ENCODE measurements at regions of chr17 and their contacts with region 1.

Region 1: GRCh38 chr17:19904924-19905323 is 37.2 kb upstream of the ULK2 start:
- DNase-seq: no peak
- ATAC-seq: no peak
- H3K4me3 ChIP-seq: no peak overlapping the region
- H3K4me3 Mint-ChIP-seq: no peak overlapping the region
- H3K27ac ChIP-seq: no peak overlapping the region
- H3K27ac Mint-ChIP-seq: peak overlapping the region in 1 of 2 donors; percentile 16
- H3K4me1 ChIP-seq: no peaks in the 10 kb centered on the region
- H3K4me1 Mint-ChIP-seq: no peaks in the 10 kb centered on the region
- H3K27me3 ChIP-seq: no peaks in the 10 kb centered on the region
- H3K27me3 Mint-ChIP-seq: no peaks in the 10 kb centered on the region

Region 2: GRCh38 chr17:19629449-19629848 is 275.5 kb before region 1 on chr17:
- CTCF ChIA-PET with region 1: no interaction called
- POLR2A ChIA-PET with region 1: no interaction called
- DNase-seq: no peak
- ATAC-seq: no peak
- H3K4me3 ChIP-seq: no peak overlapping the region
- H3K4me3 Mint-ChIP-seq: no peak overlapping the region
- H3K27ac ChIP-seq: no peak overlapping the region
- H3K27ac Mint-ChIP-seq: no peak overlapping the region
- H3K4me1 ChIP-seq: no peaks in the 10 kb centered on the region
- H3K4me1 Mint-ChIP-seq: no peaks in the 10 kb centered on the region
- H3K27me3 ChIP-seq: peaks cover 0 to 3% of the 10 kb centered on the region in 2 experiments
- H3K27me3 Mint-ChIP-seq: peaks cover 11 to 16% of the 10 kb centered on the region in 2 donors

Region 3: DNA sequence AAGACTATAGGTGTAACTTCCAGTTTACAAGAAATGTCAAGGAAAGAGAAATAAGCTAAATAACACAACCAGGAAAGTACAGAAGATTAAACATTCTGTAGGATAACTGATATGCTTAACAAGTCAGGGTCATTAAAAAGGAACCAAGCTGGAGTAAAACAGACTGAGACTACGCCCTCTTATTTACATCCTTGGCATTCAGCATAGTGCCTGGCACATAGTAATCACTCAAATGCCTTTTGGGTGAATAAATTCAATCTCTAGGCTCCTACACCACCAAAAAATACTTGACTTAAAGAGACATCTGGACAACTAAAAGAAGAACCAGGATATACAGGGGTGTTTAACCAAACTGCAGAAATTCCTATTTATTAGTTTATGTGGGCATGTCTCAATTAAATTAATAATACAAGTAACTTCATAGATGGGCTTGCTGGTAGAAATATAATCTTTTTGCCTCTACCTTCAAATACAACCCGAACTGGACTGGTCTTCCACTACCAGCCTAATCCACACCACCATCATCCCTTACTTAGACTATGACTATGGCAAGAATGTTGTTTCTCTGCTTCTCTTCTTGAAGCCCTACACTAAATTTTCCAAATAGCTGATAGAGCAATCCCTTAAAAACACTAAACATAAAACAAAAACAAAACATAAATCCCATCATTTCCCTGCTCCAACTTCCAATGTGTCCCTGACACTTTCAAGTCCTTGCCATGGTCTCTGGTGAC is 10.5 kb after region 1 on chr17:
- CTCF ChIA-PET with region 1: no interaction called
- POLR2A ChIA-PET with region 1: interaction called in 1 of 2 experiments, 13 read pairs
- DNase-seq: no peak
- ATAC-seq: no peak
- H3K4me3 ChIP-seq: no peak overlapping the region
- H3K4me3 Mint-ChIP-seq: no peak overlapping the region
- H3K27ac ChIP-seq: no peak overlapping the region
- H3K27ac Mint-ChIP-seq: no peak overlapping the region
- H3K4me1 ChIP-seq: no peaks in the 10 kb centered on the region
- H3K4me1 Mint-ChIP-seq: peaks cover 0 to 22% (median 0%) of the 10 kb centered on the region in 3 donors
- H3K27me3 ChIP-seq: no peaks in the 10 kb centered on the region
- H3K27me3 Mint-ChIP-seq: no peaks in the 10 kb centered on the region

Measured in T-cell (primary cell).